ENCODE measurements at regions of chrX and their contacts with region 1.

Region 1: DNA sequence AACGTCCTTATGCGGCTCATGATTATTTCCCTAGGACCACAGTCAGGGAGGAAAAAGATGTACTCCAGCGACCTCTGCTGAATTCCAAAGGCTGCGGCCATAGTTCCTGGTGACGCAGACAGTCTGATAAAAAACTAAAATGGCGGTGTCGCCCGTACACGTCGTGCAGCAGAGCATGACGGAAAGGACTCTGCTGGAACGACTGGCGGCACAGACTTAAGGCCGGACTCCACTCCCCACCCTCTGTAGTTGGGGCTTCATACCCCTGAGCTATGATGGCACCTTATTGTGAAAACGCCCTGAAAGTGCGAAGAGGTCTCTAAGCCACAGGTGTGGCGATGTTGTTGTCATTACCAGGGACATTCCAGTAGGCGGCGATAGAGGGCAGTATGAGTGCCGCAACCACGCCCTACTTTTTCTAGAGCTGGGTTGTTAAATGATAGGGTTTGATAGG is 90.0 kb upstream of the EDA2R start:
- DNase-seq: peak; percentile 27
- H3K4me3 ChIP-seq: peak overlapping the region; percentile 72
- H3K27ac ChIP-seq: no peak overlapping the region
- H3K27me3 ChIP-seq: no peaks in the 10 kb centered on the region
- CTCF ChIP-seq: peak; percentile 67

Region 2: GRCh38 chrX:66030505-66031317 is 698.1 kb before region 1 on chrX:
- CTCF ChIA-PET with region 1: interaction called, 21 read pairs
- POLR2A ChIA-PET with region 1: no interaction called
- DNase-seq: no peak
- H3K4me3 ChIP-seq: no peak overlapping the region
- H3K27ac ChIP-seq: no peak overlapping the region
- H3K27me3 ChIP-seq: no peaks in the 10 kb centered on the region
- CTCF ChIP-seq: peak; percentile 59

Region 3: DNA sequence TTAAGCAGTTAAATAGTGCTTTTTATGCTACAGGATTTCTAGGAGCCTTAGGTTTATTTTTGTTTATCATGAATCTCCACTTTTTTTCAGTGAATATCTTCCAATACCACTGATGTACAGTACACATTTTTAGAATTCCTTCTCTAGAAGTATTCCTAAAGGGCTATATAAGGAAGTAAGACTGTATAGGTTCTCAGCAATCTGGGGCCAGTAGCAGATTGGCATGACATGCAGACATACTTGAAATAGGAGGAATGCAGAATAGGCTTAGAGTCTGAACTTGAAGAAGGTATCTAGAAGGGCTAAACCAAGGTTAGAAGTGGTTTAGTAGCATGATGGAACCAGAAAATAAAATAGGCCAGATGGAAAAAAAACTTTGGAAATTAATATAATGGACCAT is 535.0 kb before region 1 on chrX:
- CTCF ChIA-PET with region 1: interaction called, 15 read pairs
- POLR2A ChIA-PET with region 1: no interaction called
- DNase-seq: no peak
- H3K4me3 ChIP-seq: no peak overlapping the region
- H3K27ac ChIP-seq: no peak overlapping the region
- H3K27me3 ChIP-seq: no peaks in the 10 kb centered on the region
- CTCF ChIP-seq: no peak

Region 4: DNA sequence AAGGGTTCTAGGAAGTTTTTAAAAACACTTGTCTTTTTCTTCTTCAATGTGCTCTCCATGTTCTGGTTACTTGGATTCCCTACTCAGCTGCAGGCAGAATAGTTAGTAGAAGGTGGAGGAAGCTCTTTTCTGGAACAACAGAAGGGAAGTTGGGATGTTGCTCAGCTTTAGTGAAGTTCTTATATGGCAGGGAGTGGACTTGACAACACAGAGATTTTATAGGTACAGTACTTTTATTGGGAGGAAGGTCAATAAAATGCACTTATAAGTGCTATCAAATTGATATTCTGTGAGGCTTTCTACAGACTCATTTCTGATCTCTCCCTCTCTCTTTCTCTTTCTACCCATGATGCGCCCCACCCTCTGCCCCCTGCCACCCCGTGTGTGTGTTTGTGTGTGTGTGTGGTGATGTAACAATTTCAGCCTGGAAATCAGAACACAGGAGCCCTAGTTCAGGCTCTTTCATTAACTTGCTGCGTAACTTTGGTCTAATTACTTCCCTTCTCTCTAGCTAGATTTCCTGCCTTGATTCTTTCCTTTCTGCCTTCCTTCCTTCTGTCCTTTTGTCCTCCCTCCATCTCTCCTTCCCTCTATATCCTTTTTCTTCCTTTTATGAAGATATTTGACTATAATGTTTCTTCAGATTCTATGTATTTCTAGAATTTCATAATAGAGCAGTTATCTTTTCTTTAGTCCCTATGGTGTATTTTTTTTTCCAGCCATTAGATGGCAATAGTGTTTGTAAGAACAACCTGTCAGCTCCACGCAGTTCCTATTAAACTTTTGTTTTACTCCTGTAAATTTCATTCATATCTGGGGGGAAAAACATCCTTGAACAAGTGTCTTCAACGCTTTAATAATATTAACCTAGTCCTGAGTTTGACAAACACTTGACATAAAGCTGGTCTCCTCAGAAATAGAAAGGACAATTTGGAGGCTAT is 527.7 kb before region 1 on chrX:
- CTCF ChIA-PET with region 1: interaction called, 112 read pairs
- POLR2A ChIA-PET with region 1: no interaction called
- DNase-seq: no peak
- H3K4me3 ChIP-seq: no peak overlapping the region
- H3K27ac ChIP-seq: no peak overlapping the region
- H3K27me3 ChIP-seq: no peaks in the 10 kb centered on the region
- CTCF ChIP-seq: peak; percentile 44

Region 5: GRCh38 chrX:66676990-66677389 is 51.9 kb before region 1 on chrX:
- CTCF ChIA-PET with region 1: interaction called, 14 read pairs
- POLR2A ChIA-PET with region 1: no interaction called
- DNase-seq: peak; percentile 6
- H3K4me3 ChIP-seq: no peak overlapping the region
- H3K27ac ChIP-seq: peak overlapping the region; percentile 12
- H3K27me3 ChIP-seq: no peaks in the 10 kb centered on the region
- CTCF ChIP-seq: no peak

Region 6: DNA sequence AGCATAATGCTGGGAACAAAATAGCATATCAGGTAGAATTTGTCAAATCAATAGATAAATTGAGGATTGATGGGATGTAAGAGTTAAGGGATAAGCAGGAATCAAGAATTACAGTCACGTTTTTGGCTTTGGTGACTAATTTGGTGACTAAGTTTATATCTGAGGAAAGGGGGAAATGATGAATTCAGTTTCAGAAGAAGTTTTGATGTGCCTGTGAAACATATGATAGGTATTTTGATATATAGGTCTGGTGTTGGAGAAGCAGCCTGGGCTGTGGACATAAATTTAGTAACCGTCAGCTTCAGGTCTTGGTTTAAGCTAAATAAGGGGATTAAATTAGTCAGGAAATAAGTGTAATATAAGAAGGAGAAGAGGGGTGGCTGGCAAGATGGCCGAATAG is 10.9 kb before region 1 on chrX:
- CTCF ChIA-PET with region 1: interaction called, 13 read pairs
- POLR2A ChIA-PET with region 1: no interaction called
- DNase-seq: no peak
- H3K4me3 ChIP-seq: no peak overlapping the region
- H3K27ac ChIP-seq: no peak overlapping the region
- H3K27me3 ChIP-seq: no peaks in the 10 kb centered on the region
- CTCF ChIP-seq: no peak

Region 7: DNA sequence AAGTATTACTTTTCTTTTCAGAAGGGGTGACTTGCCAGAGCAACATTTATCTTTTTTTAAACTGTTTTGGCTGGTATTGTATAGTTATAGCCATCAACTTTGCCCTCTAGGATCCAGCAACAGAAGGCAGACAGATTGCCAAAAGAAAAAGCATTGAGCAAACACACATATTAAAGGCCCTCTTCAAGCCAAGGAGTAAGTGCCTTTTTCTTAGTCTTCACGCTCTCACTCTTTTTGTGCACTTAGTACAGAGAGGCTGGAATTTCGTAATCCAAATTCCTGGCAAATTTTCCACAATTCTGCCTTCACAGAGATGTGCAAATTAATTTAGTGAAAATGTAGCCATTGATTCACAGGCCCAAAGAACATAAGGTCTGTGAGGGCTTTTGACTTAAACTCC is 163.2 kb after region 1 on chrX:
- CTCF ChIA-PET with region 1: no interaction called
- POLR2A ChIA-PET with region 1: no interaction called
- DNase-seq: no peak
- H3K4me3 ChIP-seq: no peak overlapping the region
- H3K27ac ChIP-seq: no peak overlapping the region
- H3K27me3 ChIP-seq: no peaks in the 10 kb centered on the region
- CTCF ChIP-seq: no peak

Measured in AG04450 (cell line).